Calu3 (cell line): ENCODE measurements at regions of chr3 and their contacts with region 1.

Region 1: DNA sequence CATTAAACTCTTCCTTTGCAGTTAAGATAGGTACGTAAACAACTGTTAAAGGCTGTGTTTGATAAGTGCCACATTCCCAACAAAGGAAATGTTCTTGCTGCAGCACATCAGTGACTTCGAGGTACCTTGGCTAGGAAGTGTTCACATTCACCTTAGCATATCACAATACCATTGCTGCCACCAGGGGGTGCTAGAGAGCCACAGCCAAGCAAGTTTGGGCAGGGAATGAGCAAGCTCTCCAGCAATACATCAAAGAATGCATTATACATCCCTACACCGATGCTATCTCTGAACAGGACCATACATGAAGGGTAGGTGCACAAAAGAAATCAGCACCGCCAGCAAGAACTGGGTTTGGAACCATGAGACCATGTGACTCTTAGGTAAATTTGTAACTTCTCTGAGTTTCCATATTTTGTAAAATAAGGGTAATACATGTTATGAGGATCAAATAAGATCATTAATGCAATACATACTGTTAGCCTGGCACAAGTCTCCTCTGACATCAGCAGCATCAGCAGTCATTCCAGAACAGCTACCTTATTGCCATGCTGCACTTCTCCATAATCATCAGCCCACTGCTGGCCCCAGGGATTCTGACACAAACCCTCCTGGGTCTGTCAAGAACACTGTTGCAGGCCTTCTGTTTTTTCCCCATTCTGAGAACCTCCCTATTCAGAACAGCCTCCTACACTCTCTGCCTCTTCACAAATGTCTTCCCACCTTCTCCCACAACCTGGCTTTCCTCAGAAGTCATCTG is 37.6 kb downstream of the RYK start:
- DNase-seq: peak; percentile 97
- H3K4me3 Mint-ChIP-seq: no peak overlapping the region
- H3K27ac Mint-ChIP-seq: no peak overlapping the region
- H3K4me1 Mint-ChIP-seq: peaks cover 8% of the 10 kb centered on the region
- H3K27me3 Mint-ChIP-seq: no peaks in the 10 kb centered on the region
- CTCF ChIP-seq: peak; percentile 100

Region 2: GRCh38 chr3:132730891-132731580 is 1482.0 kb before region 1 on chr3:
- CTCF ChIA-PET with region 1: no interaction called
- intact Hi-C with region 1: loop called (anchors 5 kb)
- DNase-seq: peak; percentile 48
- H3K4me3 Mint-ChIP-seq: no peak overlapping the region
- H3K27ac Mint-ChIP-seq: no peak overlapping the region
- H3K4me1 Mint-ChIP-seq: no peaks in the 10 kb centered on the region
- H3K27me3 Mint-ChIP-seq: peaks cover 65% of the 10 kb centered on the region
- CTCF ChIP-seq: peak; percentile 52

Region 3: GRCh38 chr3:133821767-133822638 is 391.1 kb before region 1 on chr3:
- CTCF ChIA-PET with region 1: no interaction called
- intact Hi-C with region 1: loop called (anchors 2 kb)
- DNase-seq: peak; percentile 73
- H3K4me3 Mint-ChIP-seq: no peak overlapping the region
- H3K27ac Mint-ChIP-seq: peak overlapping the region; percentile 8
- H3K4me1 Mint-ChIP-seq: peaks cover 8% of the 10 kb centered on the region
- H3K27me3 Mint-ChIP-seq: no peaks in the 10 kb centered on the region
- CTCF ChIP-seq: peak; percentile 70

Region 4: GRCh38 chr3:133887803-133888559 is 325.1 kb before region 1 on chr3:
- CTCF ChIA-PET with region 1: no interaction called
- intact Hi-C with region 1: no loop called
- DNase-seq: no peak
- H3K4me3 Mint-ChIP-seq: no peak overlapping the region
- H3K27ac Mint-ChIP-seq: no peak overlapping the region
- H3K4me1 Mint-ChIP-seq: no peaks in the 10 kb centered on the region
- H3K27me3 Mint-ChIP-seq: peaks cover 86% of the 10 kb centered on the region
- CTCF ChIP-seq: no peak

Region 5: DNA sequence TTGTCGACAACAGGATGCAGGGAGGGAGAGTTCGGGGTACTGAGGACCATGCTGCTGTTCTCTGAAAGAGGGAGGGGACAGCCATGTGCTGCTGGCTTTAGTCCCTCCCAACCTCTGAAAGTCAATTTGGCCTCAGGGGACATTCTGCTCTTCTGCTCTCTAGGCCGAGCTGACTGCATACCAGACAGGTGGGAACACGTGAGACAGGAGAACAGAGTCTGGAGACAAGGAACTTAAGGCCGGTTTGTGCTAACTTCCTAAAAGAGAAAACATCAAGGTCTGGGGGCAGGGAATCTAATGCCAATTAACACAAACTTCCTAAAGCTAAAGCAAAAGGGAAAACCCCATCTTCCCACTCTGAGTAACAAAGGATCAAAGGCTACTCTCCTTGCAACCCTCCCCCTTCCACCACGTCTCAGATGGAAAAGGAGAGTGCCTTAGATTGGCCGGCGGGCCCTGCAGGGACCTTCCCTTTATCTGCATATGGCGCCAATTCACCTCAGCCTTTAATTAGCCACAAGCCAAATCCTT is 224.4 kb before region 1 on chr3:
- CTCF ChIA-PET with region 1: no interaction called
- intact Hi-C with region 1: no loop called
- DNase-seq: no peak
- H3K4me3 Mint-ChIP-seq: no peak overlapping the region
- H3K27ac Mint-ChIP-seq: no peak overlapping the region
- H3K4me1 Mint-ChIP-seq: peaks cover 31% of the 10 kb centered on the region
- H3K27me3 Mint-ChIP-seq: peaks cover 81% of the 10 kb centered on the region
- CTCF ChIP-seq: no peak

Region 6: DNA sequence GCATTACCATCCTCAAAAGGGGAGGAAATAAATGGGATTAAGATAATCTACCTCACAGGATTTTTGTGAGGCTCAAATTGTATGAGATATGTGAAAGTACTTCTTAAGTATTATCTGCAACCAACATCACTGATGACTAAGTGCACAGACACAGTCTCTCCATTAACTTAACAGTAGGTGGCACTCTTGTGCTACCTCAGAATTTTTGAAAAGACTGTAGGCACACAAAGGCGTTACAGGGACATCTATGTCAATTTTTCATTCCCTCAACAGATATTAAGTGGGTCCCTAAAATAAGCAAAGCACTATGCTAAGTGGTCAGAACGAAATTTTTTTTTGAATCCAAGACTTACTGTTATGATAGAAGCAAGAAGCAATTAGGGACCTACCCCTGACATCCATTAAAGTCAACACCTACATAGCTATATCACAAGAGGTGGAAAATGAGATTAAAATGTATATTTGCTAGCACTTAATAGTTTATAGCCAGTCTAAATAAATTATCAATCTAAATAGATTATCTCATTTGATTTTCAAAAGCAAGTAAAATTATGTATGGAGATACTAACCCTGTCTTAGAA is 15.3 kb before region 1 on chr3:
- CTCF ChIA-PET with region 1: interaction called, 64 read pairs
- intact Hi-C with region 1: loop called (anchors 1 kb)
- DNase-seq: peak; percentile 51
- H3K4me3 Mint-ChIP-seq: no peak overlapping the region
- H3K27ac Mint-ChIP-seq: no peak overlapping the region
- H3K4me1 Mint-ChIP-seq: peaks cover 23% of the 10 kb centered on the region
- H3K27me3 Mint-ChIP-seq: no peaks in the 10 kb centered on the region
- CTCF ChIP-seq: peak; percentile 84

Region 7: DNA sequence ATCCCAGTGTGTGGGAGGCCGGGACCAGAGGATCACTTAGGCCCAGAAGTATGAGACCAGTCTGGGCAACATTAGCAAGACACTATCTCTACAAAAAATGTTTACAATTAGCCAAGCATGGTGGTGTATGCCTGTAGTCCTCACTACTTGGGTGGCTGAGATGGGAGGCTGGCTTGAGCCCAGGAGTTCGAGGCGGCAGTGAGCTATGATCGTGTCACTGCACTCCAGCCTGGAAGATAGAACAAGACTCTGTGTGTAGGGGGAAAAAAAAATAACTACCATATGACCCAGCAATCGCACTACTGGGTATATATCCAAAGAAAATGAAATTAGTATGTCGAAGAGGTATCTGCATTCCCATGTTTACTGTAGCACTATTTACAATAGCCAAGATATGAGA is 14.9 kb after region 1 on chr3:
- CTCF ChIA-PET with region 1: interaction called, 11 read pairs
- intact Hi-C with region 1: loop called (anchors 1 kb)
- DNase-seq: no peak
- H3K4me3 Mint-ChIP-seq: no peak overlapping the region
- H3K27ac Mint-ChIP-seq: no peak overlapping the region
- H3K4me1 Mint-ChIP-seq: peaks cover 30% of the 10 kb centered on the region
- H3K27me3 Mint-ChIP-seq: no peaks in the 10 kb centered on the region
- CTCF ChIP-seq: no peak

Region 8: DNA sequence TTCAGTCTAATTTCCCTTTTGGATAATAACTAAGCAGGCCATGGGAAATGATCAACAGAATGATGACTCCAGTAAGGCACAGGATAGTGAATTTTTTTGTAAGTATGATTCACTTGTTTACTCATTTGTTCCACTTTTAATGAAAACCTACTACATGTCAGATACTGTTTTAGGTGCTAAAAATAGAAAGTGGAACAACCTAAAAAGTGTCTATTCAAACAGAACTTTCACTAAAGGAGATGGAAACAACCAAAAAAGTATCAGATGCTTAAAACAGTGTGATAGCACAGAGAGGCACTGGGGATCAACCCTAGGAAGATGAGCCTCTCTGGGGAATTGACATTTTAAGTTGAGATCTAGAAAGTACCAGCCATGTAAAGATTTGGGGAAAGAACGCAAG is 26.5 kb after region 1 on chr3:
- CTCF ChIA-PET with region 1: interaction called, 13 read pairs
- intact Hi-C with region 1: no loop called
- DNase-seq: no peak
- H3K4me3 Mint-ChIP-seq: no peak overlapping the region
- H3K27ac Mint-ChIP-seq: no peak overlapping the region
- H3K4me1 Mint-ChIP-seq: peaks cover 80% of the 10 kb centered on the region
- H3K27me3 Mint-ChIP-seq: no peaks in the 10 kb centered on the region
- CTCF ChIP-seq: no peak

Region 9: DNA sequence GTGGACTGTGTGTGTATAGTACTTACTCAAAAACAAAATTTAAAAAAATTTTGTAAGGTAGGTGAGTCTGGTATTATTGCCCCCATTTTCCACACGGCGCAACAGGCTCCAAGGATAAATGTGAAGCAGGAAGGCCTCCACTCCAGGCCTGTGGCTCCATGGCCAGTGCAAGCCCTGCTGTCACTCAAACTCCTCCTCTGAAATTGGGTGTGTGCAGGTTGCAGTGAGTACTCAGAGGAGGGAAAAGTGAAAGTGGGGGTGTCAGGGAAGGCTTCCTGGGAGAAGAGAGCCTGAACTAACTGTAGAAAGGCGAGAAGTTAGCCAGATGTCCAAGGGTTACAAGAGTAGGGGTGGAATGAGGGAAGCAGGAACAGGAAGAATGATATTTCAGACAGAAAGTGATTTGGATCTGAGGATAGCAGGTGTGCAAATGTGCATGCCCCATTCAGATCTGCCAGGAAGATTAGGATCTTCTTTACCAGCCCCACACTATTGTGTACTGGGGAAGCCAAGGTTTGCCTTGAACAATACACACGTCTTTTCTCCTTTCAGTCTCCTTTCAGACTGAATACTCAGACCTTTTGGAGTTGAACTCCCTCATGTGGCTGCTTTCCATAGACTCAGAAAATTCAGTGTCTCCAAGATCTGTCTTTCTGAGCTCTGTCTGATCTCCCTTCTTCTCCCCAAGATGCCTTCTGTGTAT is 86.2 kb after region 1 on chr3:
- CTCF ChIA-PET with region 1: interaction called, 12 read pairs
- intact Hi-C with region 1: loop called (anchors 1 kb)
- DNase-seq: no peak
- H3K4me3 Mint-ChIP-seq: no peak overlapping the region
- H3K27ac Mint-ChIP-seq: no peak overlapping the region
- H3K4me1 Mint-ChIP-seq: no peaks in the 10 kb centered on the region
- H3K27me3 Mint-ChIP-seq: no peaks in the 10 kb centered on the region
- CTCF ChIP-seq: peak; percentile 40